CD4-positive, alpha-beta memory T cell (primary cell): ENCODE measurements at regions of chr4 and their contacts with region 1.

Region 1: DNA sequence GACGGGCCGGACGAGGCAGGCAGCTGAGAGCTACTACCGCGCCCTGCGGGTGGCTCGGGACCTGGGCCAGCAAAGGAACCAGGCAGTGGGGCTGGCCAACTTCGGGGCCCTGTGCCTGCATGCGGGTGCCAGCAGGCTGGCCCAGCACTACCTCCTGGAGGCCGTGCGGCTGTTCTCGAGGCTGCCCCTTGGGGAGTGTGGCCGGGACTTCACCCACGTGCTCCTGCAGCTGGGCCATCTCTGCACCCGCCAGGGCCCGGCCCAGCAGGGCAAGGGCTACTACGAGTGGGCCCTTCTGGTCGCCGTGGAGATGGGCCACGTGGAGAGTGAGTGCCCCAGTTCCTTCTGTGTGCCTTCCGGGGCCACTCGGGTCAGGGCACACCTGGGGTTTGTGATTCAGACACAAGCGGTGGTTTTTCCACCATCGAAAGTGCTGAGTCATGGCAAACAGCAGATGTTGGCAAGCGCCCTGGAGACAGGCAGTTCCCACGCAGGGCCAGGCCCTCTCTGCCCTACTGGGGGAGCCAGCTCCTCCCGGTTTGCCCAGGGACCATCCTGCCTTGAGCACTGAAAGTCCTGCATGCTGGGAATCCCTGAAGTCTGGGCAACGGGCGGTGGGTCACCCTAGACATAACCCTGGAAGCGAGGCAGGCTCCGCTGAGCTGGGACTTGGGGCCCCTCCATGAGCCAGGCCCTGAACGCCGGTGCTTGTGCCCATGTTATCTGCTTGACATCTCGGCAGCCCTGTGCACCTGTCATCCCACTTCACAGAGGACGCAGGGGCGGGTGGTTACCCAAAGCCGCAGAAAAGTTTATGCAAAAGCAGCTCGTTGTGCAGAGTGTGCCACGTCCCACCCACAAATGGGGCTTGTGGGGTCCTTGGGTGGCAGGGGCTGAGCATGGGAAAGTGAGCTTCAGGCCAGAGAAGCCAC is 29.5 kb downstream of the SH3TC1 start:
- DNase-seq: peak; percentile 77 to 91 (median 81)
- H3K4me3 ChIP-seq: peak overlapping the region in 1 of 2 donors; percentile 47
- H3K4me3 Mint-ChIP-seq: peak overlapping the region; percentile 52 to 84 (median 70)
- H3K27ac ChIP-seq: peak overlapping the region; percentile 65
- H3K27ac Mint-ChIP-seq: peak overlapping the region; percentile 68 to 94 (median 89)
- H3K4me1 ChIP-seq: peaks cover 46% of the 10 kb centered on the region
- H3K4me1 Mint-ChIP-seq: peaks cover 25 to 46% (median 37%) of the 10 kb centered on the region in 4 donors
- H3K27me3 ChIP-seq: no peaks in the 10 kb centered on the region
- H3K27me3 Mint-ChIP-seq: no peaks in the 10 kb centered on the region

Region 2: GRCh38 chr4:8198906-8199593 is 29.5 kb before region 1 on chr4 and contains the start of gene SH3TC1:
- CTCF ChIA-PET with region 1: interaction called, 5 read pairs
- POLR2A ChIA-PET with region 1: interaction called, 31 read pairs
- intact Hi-C with region 1: no loop called
- DNase-seq: peak; percentile 45 to 69 (median 62)
- H3K4me3 ChIP-seq: peak within 1 kb of the TSS; percentile 55 to 85
- H3K4me3 Mint-ChIP-seq: peak within 1 kb of the TSS; percentile 94 to 97 (median 96)
- H3K27ac ChIP-seq: peak within 1 kb of the TSS; percentile 84
- H3K27ac Mint-ChIP-seq: peak within 1 kb of the TSS; percentile 96 to 99 (median 98)
- H3K4me1 ChIP-seq: peaks cover 54% of the 10 kb centered on the region
- H3K4me1 Mint-ChIP-seq: peaks cover 22 to 57% (median 42%) of the 10 kb centered on the region in 4 donors
- H3K27me3 ChIP-seq: no peaks in the 10 kb centered on the region
- H3K27me3 Mint-ChIP-seq: no peaks in the 10 kb centered on the region
- total RNA-seq, gene SH3TC1: 37.1 to 41.3 TPM

Region 3: DNA sequence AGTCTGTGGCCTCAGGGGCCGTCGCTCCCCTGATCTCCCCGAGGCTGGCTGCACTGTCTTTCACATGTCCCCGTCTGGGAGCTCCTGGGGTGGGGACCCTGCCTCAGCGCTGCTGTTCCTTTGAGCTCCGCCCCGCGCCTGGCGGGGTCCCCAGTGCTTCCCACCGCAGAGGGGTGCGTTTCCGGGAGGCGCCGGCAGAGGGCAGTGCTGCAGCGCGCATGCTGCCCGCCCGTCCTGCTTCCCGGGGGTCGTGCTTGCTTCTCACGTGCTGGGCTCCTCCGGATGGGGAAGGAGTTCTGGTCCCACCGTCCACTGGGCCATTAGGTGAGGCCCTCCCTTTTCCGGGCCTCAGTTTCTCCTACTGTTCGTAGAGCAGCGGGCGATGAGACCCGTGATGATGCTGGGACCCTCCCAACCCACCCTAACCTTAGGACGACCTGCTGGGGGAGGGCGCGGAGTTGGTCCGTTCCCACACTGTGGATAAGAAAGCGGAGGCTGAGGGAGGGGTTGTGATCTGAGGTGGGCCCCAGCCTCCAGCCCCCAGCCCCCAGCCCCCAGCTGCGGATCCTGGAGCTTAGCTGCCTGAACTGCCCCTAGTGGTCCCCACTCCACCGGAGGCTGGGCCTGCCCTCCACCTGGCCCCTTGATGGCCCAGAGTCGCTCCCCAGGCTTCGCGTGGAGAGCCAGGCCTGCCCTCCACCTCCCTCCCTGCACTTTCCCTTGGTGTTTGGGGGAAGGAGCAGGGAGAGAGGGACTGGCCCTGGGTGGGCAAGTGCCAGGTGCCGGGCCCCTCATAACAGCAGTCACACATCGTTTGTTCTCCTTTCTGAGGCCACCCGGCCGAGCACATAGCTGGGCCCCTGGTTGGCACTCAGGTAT is 379.3 kb after region 1 on chr4:
- CTCF ChIA-PET with region 1: no interaction called
- POLR2A ChIA-PET with region 1: no interaction called
- intact Hi-C with region 1: no loop called
- DNase-seq: peak in 1 of 5 donors; percentile 4
- H3K4me3 ChIP-seq: no peak overlapping the region
- H3K4me3 Mint-ChIP-seq: peak overlapping the region in 1 of 8 donors; percentile 26
- H3K27ac ChIP-seq: no peak overlapping the region
- H3K27ac Mint-ChIP-seq: no peak overlapping the region
- H3K4me1 ChIP-seq: no peaks in the 10 kb centered on the region
- H3K4me1 Mint-ChIP-seq: peaks cover 0 to 3% (median 2%) of the 10 kb centered on the region in 4 donors
- H3K27me3 ChIP-seq: no peaks in the 10 kb centered on the region
- H3K27me3 Mint-ChIP-seq: peaks cover 0 to 3% of the 10 kb centered on the region in 2 donors